Activated CD4-positive, alpha-beta T cell treated with anti-CD3 and anti-CD28 coated beads, Interleukin-2, amount 10 ng/mL, durations not matched to agents 7 days and 5 days (primary cell): ENCODE measurements at regions of chr15 and their contacts with region 1.

Region 1: DNA sequence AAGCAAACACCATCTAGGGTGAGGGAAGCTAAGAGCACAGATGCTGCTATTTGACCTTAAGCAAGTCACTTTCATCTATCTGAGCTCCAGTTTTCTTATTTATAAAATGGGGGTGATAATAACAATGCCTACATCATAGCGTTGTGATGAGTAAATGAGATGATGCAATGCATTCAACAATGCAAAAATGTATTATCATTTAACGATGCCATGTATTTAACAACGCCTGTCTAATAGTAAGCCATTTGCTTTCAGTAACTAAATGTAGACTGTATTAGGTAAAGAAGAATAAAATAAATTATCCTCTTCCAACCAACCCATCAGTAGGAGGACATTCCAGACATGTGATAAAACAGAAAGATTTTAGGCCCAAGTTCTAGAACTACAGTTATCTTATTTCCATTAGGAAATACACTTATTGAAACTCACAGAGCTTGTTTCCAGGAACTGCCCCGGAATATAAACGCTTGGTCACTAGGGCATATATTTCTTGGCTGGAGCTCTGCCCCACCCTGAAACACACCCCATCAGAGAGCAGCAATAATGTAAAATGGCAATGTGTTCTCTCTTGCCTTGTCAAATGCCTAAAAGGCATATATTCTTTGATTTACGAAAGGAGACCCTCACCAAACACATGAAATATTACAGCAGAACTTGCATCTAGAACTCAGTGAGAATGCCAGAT is 128.3 kb downstream of the LIPC start:
- DNase-seq: no peak
- H3K4me3 Mint-ChIP-seq: no peak overlapping the region
- H3K27ac Mint-ChIP-seq: no peak overlapping the region
- H3K4me1 Mint-ChIP-seq: no peaks in the 10 kb centered on the region
- H3K27me3 Mint-ChIP-seq: peaks cover 2% of the 10 kb centered on the region

Region 2: DNA sequence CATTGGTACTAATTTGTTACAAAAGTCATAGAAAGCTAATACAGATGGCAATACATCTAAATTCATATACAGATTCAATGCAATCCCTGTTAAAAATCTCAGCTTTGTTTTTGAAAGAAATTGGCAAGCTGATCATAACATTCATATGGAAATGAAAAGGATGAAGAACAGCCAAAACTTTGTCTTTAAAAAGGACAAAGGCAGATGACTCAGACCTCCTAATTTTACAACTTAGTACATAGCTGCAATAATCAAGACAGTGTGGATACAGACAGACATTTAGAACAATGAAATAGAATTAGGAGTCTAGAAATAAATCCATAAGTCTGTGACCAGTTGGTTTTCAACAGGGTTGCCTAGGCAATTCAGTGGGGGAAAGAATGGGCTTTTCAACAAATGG is 358.5 kb before region 1 on chr15:
- CTCF ChIA-PET with region 1: no interaction called
- POLR2A ChIA-PET with region 1: no interaction called
- DNase-seq: no peak
- H3K4me3 Mint-ChIP-seq: no peak overlapping the region
- H3K27ac Mint-ChIP-seq: no peak overlapping the region
- H3K4me1 Mint-ChIP-seq: no peaks in the 10 kb centered on the region
- H3K27me3 Mint-ChIP-seq: peaks cover 28% of the 10 kb centered on the region

Region 3: DNA sequence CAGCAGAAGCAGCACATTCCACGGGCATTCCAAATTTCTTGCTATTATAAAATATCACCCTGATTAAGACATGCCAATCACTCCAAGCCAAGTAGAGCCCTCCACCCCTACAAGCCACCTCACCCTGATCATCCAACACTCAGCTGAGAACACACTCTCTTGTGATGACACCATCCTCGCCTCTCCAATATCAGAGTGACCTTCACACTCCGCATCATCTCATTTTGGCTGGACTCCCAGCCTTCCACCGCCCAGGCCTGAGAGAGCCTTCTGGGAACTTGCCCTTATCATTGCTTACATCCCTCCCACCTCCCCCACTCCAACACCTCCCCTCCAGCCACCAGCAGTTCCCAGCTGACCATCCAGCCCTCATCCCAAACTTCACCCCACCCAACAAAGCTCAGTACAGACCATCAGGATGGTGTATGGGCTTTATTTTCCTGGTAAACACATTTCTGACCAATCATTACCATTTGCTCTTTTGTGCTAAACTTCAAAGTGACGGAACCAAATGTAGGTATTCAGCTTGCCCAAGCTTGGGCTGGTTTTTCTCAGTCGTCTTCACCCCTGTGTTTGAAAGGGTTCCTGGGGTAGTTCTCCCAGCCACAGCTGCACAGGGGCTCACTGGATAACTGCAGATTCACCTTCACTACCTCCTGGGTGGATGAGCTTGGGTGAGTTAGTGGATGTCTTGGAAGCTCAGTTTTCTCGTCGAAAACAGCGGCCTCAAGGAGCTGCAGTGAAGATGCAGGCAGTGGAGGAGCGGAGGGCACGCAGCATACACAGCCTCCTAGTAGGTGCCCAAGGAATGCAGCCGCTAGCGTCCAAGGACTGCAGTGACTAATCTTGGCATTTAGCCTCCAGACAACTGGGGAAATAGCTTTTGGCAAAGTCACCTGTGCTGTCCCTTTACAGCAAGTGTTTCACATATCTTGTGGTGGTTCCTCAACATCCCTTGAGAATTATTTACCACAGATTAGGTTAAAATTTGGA is 13.1 kb before region 1 on chr15:
- CTCF ChIA-PET with region 1: interaction called, 13 read pairs
- POLR2A ChIA-PET with region 1: no interaction called
- DNase-seq: no peak
- H3K4me3 Mint-ChIP-seq: no peak overlapping the region
- H3K27ac Mint-ChIP-seq: peak overlapping the region; percentile 95
- H3K4me1 Mint-ChIP-seq: peaks cover 58% of the 10 kb centered on the region
- H3K27me3 Mint-ChIP-seq: no peaks in the 10 kb centered on the region